ENCODE measurements at regions of chr9 and their contacts with region 1.

Region 1: GRCh38 chr9:94672811-94673487 is 33.6 kb upstream of the FBP1 start:
- DNase-seq: no peak
- H3K4me3 ChIP-seq: no peak overlapping the region
- H3K27ac ChIP-seq: no peak overlapping the region
- H3K4me1 ChIP-seq: no peaks in the 10 kb centered on the region
- H3K27me3 ChIP-seq: no peaks in the 10 kb centered on the region
- CTCF ChIP-seq: no peak
- EP300 ChIP-seq: no peak
- POLR2A ChIP-seq: no peak
- RAD21 ChIP-seq: no peak

Region 2: DNA sequence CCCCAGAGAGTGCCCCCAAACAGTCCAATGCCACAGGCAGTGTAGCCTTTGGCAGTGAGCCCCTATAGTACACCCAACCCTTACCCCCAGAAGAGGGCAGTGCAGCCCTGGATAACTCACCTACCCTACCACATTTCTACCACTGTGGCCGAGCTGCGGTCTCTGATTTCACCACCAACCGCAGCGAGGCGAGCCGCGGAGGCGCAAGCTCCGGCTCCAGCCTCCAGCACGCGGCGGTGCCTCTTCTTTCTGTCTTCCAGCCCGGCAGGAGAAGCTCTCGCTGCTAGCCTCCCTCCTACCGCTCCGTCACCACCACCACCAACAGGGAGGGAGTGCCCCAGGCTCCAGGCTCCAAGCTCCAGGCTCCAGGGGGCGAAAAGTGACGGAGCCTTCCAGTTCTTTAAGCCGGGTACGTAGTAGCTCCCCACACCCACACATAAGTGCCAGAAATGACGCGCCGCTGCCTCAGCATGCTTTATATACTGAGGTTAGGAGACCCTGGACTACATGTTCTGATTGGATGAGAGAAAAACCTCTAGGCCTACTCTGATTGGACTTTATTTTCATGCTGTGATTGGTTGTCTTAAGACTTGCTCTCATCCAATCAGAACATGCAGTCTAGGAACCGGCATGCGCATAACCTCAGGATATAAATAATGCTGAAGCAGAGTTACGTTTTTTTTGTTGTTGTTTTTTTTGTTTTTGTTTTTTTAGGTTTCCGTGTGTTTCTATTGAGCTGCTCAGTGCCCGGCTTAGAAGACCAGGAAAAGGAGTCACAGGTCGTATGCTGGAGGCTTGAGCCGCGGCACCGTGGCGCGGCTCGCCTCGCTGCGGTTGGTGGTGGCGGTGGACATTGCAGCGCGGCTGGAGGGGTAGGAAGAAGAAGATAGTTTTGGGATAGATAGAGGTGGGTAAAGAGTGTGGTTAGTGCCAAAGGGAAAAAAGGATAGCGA is 118.2 kb before region 1 on chr9 and contains the start of gene PCAT7:
- CTCF ChIA-PET with region 1: no interaction called
- POLR2A ChIA-PET with region 1: no interaction called
- DNase-seq: peak; percentile 53 to 80
- H3K4me3 ChIP-seq: peak within 1 kb of the TSS; percentile 57 to 90 (median 78)
- H3K27ac ChIP-seq: peak within 1 kb of the TSS; percentile 83
- H3K4me1 ChIP-seq: peaks cover 0 to 7% (median 2%) of the 10 kb centered on the region in 4 experiments; a peak in 3 of 7 replicates
- H3K27me3 ChIP-seq: no peaks in the 10 kb centered on the region; a peak in 1 of 7 replicates
- CTCF ChIP-seq: peak; percentile 78 to 89 (median 84)
- EP300 ChIP-seq: no peak
- POLR2A ChIP-seq: peak; percentile 91 to 94
- RAD21 ChIP-seq: peak; percentile 84 to 85
- total RNA-seq, gene PCAT7: 2.3 and 3.2 TPM in 2 replicates

Region 3: DNA sequence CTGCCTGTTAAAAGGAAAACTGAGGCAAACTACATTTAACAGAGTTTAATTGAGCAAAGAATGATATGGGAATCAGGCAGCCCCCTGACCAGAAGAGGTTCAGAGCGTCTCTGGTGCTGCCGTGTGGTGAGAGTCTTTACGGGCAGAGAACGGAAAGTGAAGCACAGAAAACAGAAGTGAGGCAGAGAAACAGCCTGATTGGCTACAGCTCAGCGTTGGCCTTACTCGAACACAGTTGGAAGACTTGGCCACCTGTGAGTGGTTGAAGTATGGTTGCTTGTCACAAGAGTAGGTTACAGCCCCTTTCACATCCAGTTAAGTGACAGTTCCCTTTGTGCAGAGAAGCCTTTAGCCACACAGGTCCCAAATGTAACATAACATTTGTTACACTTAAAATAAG is 16.7 kb before region 1 on chr9:
- CTCF ChIA-PET with region 1: interaction called, 19 read pairs
- POLR2A ChIA-PET with region 1: interaction called, 3 read pairs
- DNase-seq: no peak
- H3K4me3 ChIP-seq: no peak overlapping the region
- H3K27ac ChIP-seq: no peak overlapping the region
- H3K4me1 ChIP-seq: peaks cover 0 to 4% (median 0%) of the 10 kb centered on the region in 4 experiments; a peak in 3 of 7 replicates
- H3K27me3 ChIP-seq: no peaks in the 10 kb centered on the region
- CTCF ChIP-seq: no peak
- EP300 ChIP-seq: no peak
- POLR2A ChIP-seq: no peak
- RAD21 ChIP-seq: no peak